ENCODE measurements at regions of chr1 and their contacts with region 1.

Region 1: GRCh38 chr1:160997323-160998038 is 23.5 kb downstream of the F11R start:
- DNase-seq: peak; percentile 77
- H3K4me3 ChIP-seq: no peak overlapping the region
- H3K27ac ChIP-seq: peak overlapping the region; percentile 37 to 75 (median 65)
- H3K4me1 ChIP-seq: peaks cover 0 to 17% (median 2%) of the 10 kb centered on the region in 4 donors
- H3K27me3 ChIP-seq: no peaks in the 10 kb centered on the region
- CTCF ChIP-seq: peak; percentile 50 to 82 (median 57)
- EP300 ChIP-seq: no peak
- POLR2A ChIP-seq: no peak

Region 2: GRCh38 chr1:160925652-160926241 is 71.7 kb before region 1 on chr1:
- in situ Hi-C with region 1: no loop called
- intact Hi-C with region 1: no loop called
- DNase-seq: no peak
- H3K4me3 ChIP-seq: no peak overlapping the region
- H3K27ac ChIP-seq: no peak overlapping the region
- H3K4me1 ChIP-seq: no peaks in the 10 kb centered on the region
- H3K27me3 ChIP-seq: no peaks in the 10 kb centered on the region
- CTCF ChIP-seq: no peak
- EP300 ChIP-seq: no peak
- POLR2A ChIP-seq: no peak

Region 3: GRCh38 chr1:161092621-161093028 is 95.1 kb after region 1 on chr1:
- in situ Hi-C with region 1: loop called in 3 of 4 experiments (anchors 5 to 10 kb)
- intact Hi-C with region 1: loop called (anchors 5 kb)
- DNase-seq: no peak
- H3K4me3 ChIP-seq: no peak overlapping the region
- H3K27ac ChIP-seq: no peak overlapping the region
- H3K4me1 ChIP-seq: peaks cover 4 to 26% (median 11%) of the 10 kb centered on the region in 4 donors
- H3K27me3 ChIP-seq: no peaks in the 10 kb centered on the region
- CTCF ChIP-seq: no peak
- EP300 ChIP-seq: no peak
- POLR2A ChIP-seq: no peak

Region 4: GRCh38 chr1:161098210-161099068 is 101.0 kb after region 1 on chr1 and contains the start of gene KLHDC9:
- in situ Hi-C with region 1: loop called in 3 of 4 experiments (anchors 5 to 10 kb)
- intact Hi-C with region 1: loop called (anchors 5 kb)
- DNase-seq: peak; percentile 91
- H3K4me3 ChIP-seq: peak within 1 kb of the TSS; percentile 51 to 75 (median 61)
- H3K27ac ChIP-seq: peak within 1 kb of the TSS; percentile 66 to 88 (median 76)
- H3K4me1 ChIP-seq: peaks cover 6 to 20% (median 9%) of the 10 kb centered on the region in 4 donors
- H3K27me3 ChIP-seq: no peaks in the 10 kb centered on the region
- CTCF ChIP-seq: peak in 1 of 5 experiments; percentile 26
- EP300 ChIP-seq: no peak
- POLR2A ChIP-seq: no peak
- total RNA-seq, gene KLHDC9: 0.80 to 16.9 (median 8.7) TPM in 3 of 4 donors, not detected in the other

Measured in transverse colon (tissue), 4 donors.